ENCODE measurements at regions of chr5 and their contacts with region 1.

Region 1: GRCh38 chr5:145856285-145856818 is 16.5 kb downstream of the GRXCR2 start:
- DNase-seq: peak; percentile 83
- ATAC-seq: peak; percentile 74
- H3K4me3 ChIP-seq: no peak overlapping the region
- H3K27ac ChIP-seq: peak overlapping the region; percentile 54
- H3K4me1 ChIP-seq: peaks cover 10% of the 10 kb centered on the region
- H3K27me3 ChIP-seq: no peaks in the 10 kb centered on the region
- CTCF ChIP-seq: no peak
- POLR2A ChIP-seq: no peak
- RAD21 ChIP-seq: no peak

Region 2: DNA sequence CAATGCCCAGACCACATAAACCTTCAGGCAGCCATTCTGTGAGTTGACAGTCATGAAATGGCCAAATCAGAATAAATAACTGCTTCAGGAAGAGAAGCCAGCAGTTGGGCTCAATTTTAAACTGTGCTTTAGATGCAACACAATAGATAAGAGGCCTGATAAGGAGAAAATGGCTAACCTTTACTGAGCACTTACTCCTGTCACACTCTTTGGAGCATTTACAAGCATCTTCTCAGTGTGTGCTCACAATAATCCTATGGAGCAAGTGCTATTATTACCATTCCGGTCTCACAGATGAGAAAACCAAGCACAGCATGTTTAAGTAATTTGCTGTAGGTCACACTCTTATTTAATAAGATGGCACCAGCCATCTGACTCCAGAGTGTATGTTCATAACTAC is 68.5 kb after region 1 on chr5:
- CTCF ChIA-PET with region 1: no interaction called
- POLR2A ChIA-PET with region 1: no interaction called
- dilution Hi-C with region 1: no loop called
- in situ Hi-C with region 1: no loop called
- intact Hi-C with region 1: loop called (anchors 1 kb)
- DNase-seq: no peak
- ATAC-seq: peak; percentile 31; the same call in 1 of the 2 replicates
- H3K4me3 ChIP-seq: no peak overlapping the region
- H3K27ac ChIP-seq: no peak overlapping the region
- H3K4me1 ChIP-seq: peaks cover 12% of the 10 kb centered on the region
- H3K27me3 ChIP-seq: no peaks in the 10 kb centered on the region
- CTCF ChIP-seq: no peak
- POLR2A ChIP-seq: no peak
- RAD21 ChIP-seq: no peak

Measured in IMR-90 (cell line).